ENCODE measurements at regions of chr11 and their contacts with region 1.

Region 1: GRCh38 chr11:126989942-126990715 is 10.4 kb downstream of the KIRREL3 start:
- DNase-seq: peak; percentile 77
- ATAC-seq: peak; percentile 80
- H3K4me3 ChIP-seq: peak overlapping the region; percentile 27
- H3K27ac ChIP-seq: peak overlapping the region; percentile 48
- H3K4me1 ChIP-seq: peaks cover 21% of the 10 kb centered on the region
- H3K27me3 ChIP-seq: no peaks in the 10 kb centered on the region
- CTCF ChIP-seq: peak; percentile 97
- POLR2A ChIP-seq: peak; percentile 24; the same call in 1 of the 2 replicates
- RAD21 ChIP-seq: peak; percentile 93

Region 2: GRCh38 chr11:126310228-126310991 is 679.7 kb before region 1 on chr11:
- CTCF ChIA-PET with region 1: no interaction called
- POLR2A ChIA-PET with region 1: no interaction called
- dilution Hi-C with region 1: no loop called
- in situ Hi-C with region 1: loop called (anchors 10 kb)
- intact Hi-C with region 1: loop called (anchors 1 kb)
- DNase-seq: peak; percentile 74
- ATAC-seq: peak; percentile 98
- H3K4me3 ChIP-seq: no peak overlapping the region
- H3K27ac ChIP-seq: no peak overlapping the region
- H3K4me1 ChIP-seq: peaks cover 2% of the 10 kb centered on the region; the same call in 1 of the 2 replicates
- H3K27me3 ChIP-seq: no peaks in the 10 kb centered on the region
- CTCF ChIP-seq: peak; percentile 94
- POLR2A ChIP-seq: peak; percentile 51; the same call in 1 of the 2 replicates
- RAD21 ChIP-seq: peak; percentile 99

Region 3: GRCh38 chr11:126700773-126701519 is 289.2 kb before region 1 on chr11:
- CTCF ChIA-PET with region 1: interaction called, 10 read pairs
- POLR2A ChIA-PET with region 1: no interaction called
- dilution Hi-C with region 1: no loop called
- in situ Hi-C with region 1: no loop called
- intact Hi-C with region 1: no loop called
- DNase-seq: no peak
- ATAC-seq: no peak
- H3K4me3 ChIP-seq: no peak overlapping the region
- H3K27ac ChIP-seq: no peak overlapping the region
- H3K4me1 ChIP-seq: peaks cover 7% of the 10 kb centered on the region; the same call in 1 of the 2 replicates
- H3K27me3 ChIP-seq: no peaks in the 10 kb centered on the region
- CTCF ChIP-seq: no peak
- POLR2A ChIP-seq: no peak
- RAD21 ChIP-seq: no peak

Region 4: DNA sequence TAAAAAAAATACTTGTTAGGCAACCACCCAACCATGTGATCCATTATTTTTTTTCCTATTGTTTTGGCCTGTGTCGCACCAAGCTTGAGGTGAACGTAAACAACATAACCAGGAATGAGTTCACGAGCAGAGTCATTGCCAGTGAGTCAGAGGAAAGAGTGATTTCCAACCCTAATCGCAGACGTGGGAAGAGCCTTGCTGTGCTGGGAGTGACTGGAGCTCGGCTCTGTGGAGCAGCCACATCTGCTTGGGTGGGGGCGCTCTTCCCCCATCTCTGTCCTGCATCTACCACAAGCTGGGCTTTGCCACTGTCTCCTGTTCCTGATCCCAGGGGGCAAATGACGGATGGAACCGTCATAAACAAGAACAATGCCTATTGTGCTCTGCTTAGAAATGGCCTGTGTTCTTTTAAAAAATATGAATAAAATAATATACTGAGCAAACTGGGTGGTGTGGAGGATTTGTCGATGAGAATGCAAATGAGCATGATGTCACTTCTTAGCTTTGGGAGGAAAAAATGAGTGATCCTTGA is 199.5 kb before region 1 on chr11:
- CTCF ChIA-PET with region 1: interaction called, 7 read pairs
- POLR2A ChIA-PET with region 1: no interaction called
- dilution Hi-C with region 1: no loop called
- in situ Hi-C with region 1: no loop called
- intact Hi-C with region 1: loop called (anchors 10 kb)
- DNase-seq: peak; percentile 98
- ATAC-seq: peak; percentile 97
- H3K4me3 ChIP-seq: no peak overlapping the region
- H3K27ac ChIP-seq: 0 out of 2 replicates have a peak overlapping the region, but pooled peaks have one; percentile 41
- H3K4me1 ChIP-seq: peaks cover 5% of the 10 kb centered on the region
- H3K27me3 ChIP-seq: no peaks in the 10 kb centered on the region
- CTCF ChIP-seq: peak; percentile 59
- POLR2A ChIP-seq: no peak
- RAD21 ChIP-seq: peak; percentile 72